MCF 10A (cell line): ENCODE measurements at regions of chr20 and their contacts with region 1.

Region 1: GRCh38 chr20:39605918-39606317 is 643.8 kb downstream of the DHX35 start:
- DNase-seq: peak; percentile 87
- H3K4me3 Mint-ChIP-seq: no peak overlapping the region
- H3K27ac Mint-ChIP-seq: no peak overlapping the region
- H3K4me1 Mint-ChIP-seq: peaks cover 12% of the 10 kb centered on the region
- H3K27me3 Mint-ChIP-seq: no peaks in the 10 kb centered on the region
- CTCF ChIP-seq: no peak

Region 2: DNA sequence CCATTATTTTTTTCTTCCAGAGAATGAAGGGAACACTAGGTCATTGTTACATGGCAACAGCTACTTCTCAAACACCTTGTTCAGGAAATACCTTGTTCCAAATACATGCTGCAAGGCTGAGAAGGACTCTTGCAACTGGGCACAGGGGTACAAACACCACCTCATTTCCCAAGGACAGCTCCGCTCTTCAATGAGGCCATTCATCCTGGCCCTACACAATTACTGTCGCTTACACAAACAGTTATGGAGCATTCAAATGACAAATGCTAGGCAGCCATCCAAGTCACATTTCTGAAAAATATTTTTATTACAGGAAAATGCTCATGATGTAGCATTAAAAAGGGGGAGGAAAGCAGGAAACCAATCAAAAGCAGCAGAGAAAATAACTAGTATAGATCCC is 31.9 kb before region 1 on chr20:
- CTCF ChIA-PET with region 1: no interaction called
- POLR2A ChIA-PET with region 1: no interaction called
- intact Hi-C with region 1: no loop called
- DNase-seq: no peak
- H3K4me3 Mint-ChIP-seq: no peak overlapping the region
- H3K27ac Mint-ChIP-seq: no peak overlapping the region
- H3K4me1 Mint-ChIP-seq: no peaks in the 10 kb centered on the region
- H3K27me3 Mint-ChIP-seq: no peaks in the 10 kb centered on the region
- CTCF ChIP-seq: no peak

Region 3: DNA sequence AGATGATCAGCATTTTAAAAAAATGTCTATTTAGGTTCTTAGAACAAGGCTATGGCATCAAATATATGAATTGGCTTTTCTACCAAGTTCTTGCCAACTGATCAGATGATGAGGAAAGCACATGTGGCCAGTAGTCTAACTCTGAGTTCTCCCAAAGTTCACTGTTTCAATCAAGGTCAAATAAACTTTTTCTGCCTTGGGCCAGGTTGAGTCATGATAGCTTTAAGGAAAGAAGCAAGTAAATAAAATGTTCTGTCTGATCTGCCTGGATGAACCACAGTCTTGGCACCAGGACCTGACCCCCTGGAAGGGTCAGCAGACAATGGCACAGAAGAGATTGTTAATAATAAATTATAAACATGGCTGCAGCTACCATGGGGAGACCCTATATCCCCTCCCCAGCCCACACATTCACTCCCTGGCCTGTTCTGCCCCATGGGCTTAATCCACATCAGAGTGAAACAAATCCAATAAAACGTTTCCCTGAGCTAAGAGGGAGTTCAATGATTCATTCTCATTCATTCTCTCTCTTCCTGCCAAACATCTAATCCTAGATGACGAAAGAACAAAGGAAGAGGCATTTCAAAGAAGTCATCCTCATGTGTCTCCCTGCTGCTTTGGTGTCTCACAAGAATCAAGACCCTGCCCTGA is 17.8 kb after region 1 on chr20:
- CTCF ChIA-PET with region 1: interaction called, 3 read pairs
- POLR2A ChIA-PET with region 1: interaction called, 19 read pairs
- intact Hi-C with region 1: no loop called
- DNase-seq: peak; percentile 67
- H3K4me3 Mint-ChIP-seq: no peak overlapping the region
- H3K27ac Mint-ChIP-seq: peak overlapping the region; percentile 72
- H3K4me1 Mint-ChIP-seq: peaks cover 36% of the 10 kb centered on the region
- H3K27me3 Mint-ChIP-seq: no peaks in the 10 kb centered on the region
- CTCF ChIP-seq: no peak

Region 4: GRCh38 chr20:39631557-39631956 is 25.6 kb after region 1 on chr20:
- CTCF ChIA-PET with region 1: interaction called, 4 read pairs
- POLR2A ChIA-PET with region 1: interaction called, 10 read pairs
- intact Hi-C with region 1: no loop called
- DNase-seq: peak; percentile 41
- H3K4me3 Mint-ChIP-seq: no peak overlapping the region
- H3K27ac Mint-ChIP-seq: peak overlapping the region; percentile 43
- H3K4me1 Mint-ChIP-seq: peaks cover 33% of the 10 kb centered on the region
- H3K27me3 Mint-ChIP-seq: no peaks in the 10 kb centered on the region
- CTCF ChIP-seq: no peak